Gastrocnemius medialis (tissue), 4 donors: ENCODE measurements at regions of chr13 and their contacts with region 1.

Region 1: DNA sequence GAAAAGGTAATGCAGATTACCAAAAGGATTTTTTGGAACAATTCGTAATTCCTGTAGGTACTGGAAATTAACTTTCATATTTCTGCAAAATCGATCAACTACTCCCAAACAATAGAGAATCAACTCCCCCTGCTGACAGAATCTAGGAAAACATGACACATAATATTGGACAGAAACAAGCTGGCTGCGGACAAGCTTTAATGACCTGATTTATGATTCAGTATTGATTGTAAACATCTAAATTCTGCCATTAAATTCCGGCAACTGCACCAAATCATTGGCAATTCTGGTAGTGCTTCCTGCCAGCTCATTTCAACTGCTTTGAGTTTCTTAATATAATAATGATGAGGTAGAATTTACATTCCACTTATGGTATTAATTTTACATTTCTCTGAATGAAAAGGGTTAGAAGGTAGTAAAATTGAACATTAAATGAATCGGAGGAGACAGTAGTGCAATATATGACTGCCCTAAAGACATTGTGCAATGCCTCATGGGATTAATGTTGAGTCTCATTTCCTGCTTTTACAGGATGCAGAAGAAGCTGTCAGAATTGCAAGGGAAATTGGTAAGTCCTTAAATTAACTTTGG is 146.5 kb downstream of the PCCA start:
- DNase-seq: no peak
- ATAC-seq: no peak
- H3K4me3 ChIP-seq: no peak overlapping the region
- H3K27ac ChIP-seq: no peak overlapping the region
- H3K4me1 ChIP-seq: peaks cover 21 to 30% of the 10 kb centered on the region in 2 donors
- H3K27me3 ChIP-seq: no peaks in the 10 kb centered on the region
- CTCF ChIP-seq: peak in 4 of 5 experiments; percentile 27 to 53 (median 44)
- POLR2A ChIP-seq: no peak

Region 2: GRCh38 chr13:99542788-99543406 is 692.5 kb before region 1 on chr13:
- in situ Hi-C with region 1: no loop called
- intact Hi-C with region 1: no loop called
- DNase-seq: no peak
- ATAC-seq: no peak
- H3K4me3 ChIP-seq: no peak overlapping the region
- H3K27ac ChIP-seq: no peak overlapping the region
- H3K4me1 ChIP-seq: no peaks in the 10 kb centered on the region
- H3K27me3 ChIP-seq: no peaks in the 10 kb centered on the region
- CTCF ChIP-seq: no peak
- POLR2A ChIP-seq: no peak

Region 3: GRCh38 chr13:99656092-99656745 is 579.2 kb before region 1 on chr13:
- in situ Hi-C with region 1: loop called in 2 of 4 experiments (anchors 10 to 25 kb)
- intact Hi-C with region 1: loop called (anchors 10 kb)
- DNase-seq: peak; percentile 51 to 59
- ATAC-seq: peak; percentile 79 to 83
- H3K4me3 ChIP-seq: no peak overlapping the region
- H3K27ac ChIP-seq: no peak overlapping the region
- H3K4me1 ChIP-seq: peaks cover 0 to 8% of the 10 kb centered on the region in 2 donors
- H3K27me3 ChIP-seq: no peaks in the 10 kb centered on the region
- CTCF ChIP-seq: peak; percentile 73 to 93 (median 84)
- POLR2A ChIP-seq: no peak

Region 4: DNA sequence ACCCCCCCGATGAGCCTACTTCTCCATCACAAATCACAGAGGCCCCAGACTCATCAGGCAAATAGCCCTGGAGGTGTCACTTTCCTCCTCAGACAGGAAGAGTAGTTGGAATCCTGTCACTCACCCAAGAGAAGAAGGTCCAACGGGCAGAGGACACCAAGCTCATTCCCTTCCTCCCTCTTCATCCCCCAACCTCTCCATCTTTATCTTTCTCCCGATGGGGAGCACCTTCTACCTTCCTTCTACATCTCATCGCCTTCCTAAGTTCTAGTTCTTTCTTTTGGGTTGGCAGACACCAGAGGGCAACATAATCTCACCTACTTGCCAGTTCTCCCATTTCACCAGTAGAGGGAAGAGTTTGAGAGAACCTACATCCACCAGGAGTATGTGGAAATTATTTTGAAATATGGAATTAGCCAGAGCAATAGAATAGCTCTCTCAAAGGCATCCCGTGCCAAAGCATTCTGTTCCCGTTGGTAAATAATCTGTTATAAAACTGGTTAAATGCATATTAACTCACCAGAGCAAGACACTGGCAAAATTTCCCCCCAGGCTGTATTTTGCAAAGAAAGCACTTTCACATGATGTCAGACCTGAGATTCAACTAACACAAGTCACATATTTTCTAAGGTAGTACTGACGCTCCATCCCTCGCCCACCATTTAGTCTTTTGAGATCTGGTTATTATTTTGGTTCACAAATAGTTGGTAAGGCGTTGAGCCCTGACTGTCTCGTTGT is 318.9 kb before region 1 on chr13:
- in situ Hi-C with region 1: loop called in 1 of 4 experiments (anchors 25 kb)
- intact Hi-C with region 1: loop called (anchors 2 kb)
- DNase-seq: no peak
- ATAC-seq: no peak
- H3K4me3 ChIP-seq: no peak overlapping the region
- H3K27ac ChIP-seq: no peak overlapping the region
- H3K4me1 ChIP-seq: no peaks in the 10 kb centered on the region
- H3K27me3 ChIP-seq: peaks cover 0 to 22% (median 16%) of the 10 kb centered on the region in 3 donors
- CTCF ChIP-seq: peak in 4 of 5 experiments; percentile 24 to 65 (median 49)
- POLR2A ChIP-seq: no peak

Region 5: GRCh38 chr13:100176801-100177400 is 58.5 kb before region 1 on chr13:
- in situ Hi-C with region 1: no loop called
- intact Hi-C with region 1: no loop called
- DNase-seq: no peak
- ATAC-seq: no peak
- H3K4me3 ChIP-seq: no peak overlapping the region
- H3K27ac ChIP-seq: no peak overlapping the region
- H3K4me1 ChIP-seq: no peaks in the 10 kb centered on the region
- H3K27me3 ChIP-seq: no peaks in the 10 kb centered on the region
- CTCF ChIP-seq: no peak
- POLR2A ChIP-seq: no peak

Region 6: DNA sequence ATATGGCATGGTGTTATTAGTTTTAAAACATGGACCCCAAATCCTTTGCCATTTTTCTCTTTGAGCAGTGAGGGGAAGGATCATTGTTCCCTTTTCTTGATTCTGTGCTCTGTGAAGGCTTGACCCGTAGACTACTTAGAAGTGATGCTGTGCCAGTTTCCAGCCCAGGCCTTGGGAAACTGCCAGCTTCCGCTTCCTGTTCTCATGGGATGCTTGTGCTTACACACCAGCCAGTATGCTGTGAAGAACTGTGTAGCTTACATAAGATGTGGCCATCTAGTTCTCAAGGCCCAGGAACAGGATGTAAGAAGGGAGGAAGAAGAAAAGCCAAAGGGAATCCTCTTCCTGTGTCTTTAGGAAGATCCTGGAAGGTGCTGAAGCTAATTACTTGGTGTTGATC is 34.4 kb after region 1 on chr13:
- in situ Hi-C with region 1: no loop called
- intact Hi-C with region 1: no loop called
- DNase-seq: peak; percentile 8 to 49
- ATAC-seq: peak in 1 of 2 donors; percentile 46
- H3K4me3 ChIP-seq: no peak overlapping the region
- H3K27ac ChIP-seq: no peak overlapping the region
- H3K4me1 ChIP-seq: no peaks in the 10 kb centered on the region
- H3K27me3 ChIP-seq: no peaks in the 10 kb centered on the region
- CTCF ChIP-seq: no peak
- POLR2A ChIP-seq: no peak